ENCODE measurements at regions of chr17 and their contacts with region 1.

Region 1: GRCh38 chr17:59311130-59311920 is 20.1 kb upstream of the YPEL2 start:
- DNase-seq: peak; percentile 79
- H3K4me3 ChIP-seq: no peak overlapping the region
- H3K27ac ChIP-seq: no peak overlapping the region
- H3K4me1 ChIP-seq: no peaks in the 10 kb centered on the region
- H3K27me3 ChIP-seq: no peaks in the 10 kb centered on the region
- CTCF ChIP-seq: peak; percentile 64 to 67
- POLR2A ChIP-seq: no peak

Region 2: GRCh38 chr17:59355696-59356325 is 44.5 kb after region 1 on chr17:
- CTCF ChIA-PET with region 1: no interaction called
- POLR2A ChIA-PET with region 1: no interaction called
- dilution Hi-C with region 1: no loop called
- intact Hi-C with region 1: no loop called
- DNase-seq: no peak
- H3K4me3 ChIP-seq: no peak overlapping the region
- H3K27ac ChIP-seq: no peak overlapping the region
- H3K4me1 ChIP-seq: peaks cover 5% of the 10 kb centered on the region
- H3K27me3 ChIP-seq: no peaks in the 10 kb centered on the region
- CTCF ChIP-seq: no peak
- POLR2A ChIP-seq: no peak

Region 3: DNA sequence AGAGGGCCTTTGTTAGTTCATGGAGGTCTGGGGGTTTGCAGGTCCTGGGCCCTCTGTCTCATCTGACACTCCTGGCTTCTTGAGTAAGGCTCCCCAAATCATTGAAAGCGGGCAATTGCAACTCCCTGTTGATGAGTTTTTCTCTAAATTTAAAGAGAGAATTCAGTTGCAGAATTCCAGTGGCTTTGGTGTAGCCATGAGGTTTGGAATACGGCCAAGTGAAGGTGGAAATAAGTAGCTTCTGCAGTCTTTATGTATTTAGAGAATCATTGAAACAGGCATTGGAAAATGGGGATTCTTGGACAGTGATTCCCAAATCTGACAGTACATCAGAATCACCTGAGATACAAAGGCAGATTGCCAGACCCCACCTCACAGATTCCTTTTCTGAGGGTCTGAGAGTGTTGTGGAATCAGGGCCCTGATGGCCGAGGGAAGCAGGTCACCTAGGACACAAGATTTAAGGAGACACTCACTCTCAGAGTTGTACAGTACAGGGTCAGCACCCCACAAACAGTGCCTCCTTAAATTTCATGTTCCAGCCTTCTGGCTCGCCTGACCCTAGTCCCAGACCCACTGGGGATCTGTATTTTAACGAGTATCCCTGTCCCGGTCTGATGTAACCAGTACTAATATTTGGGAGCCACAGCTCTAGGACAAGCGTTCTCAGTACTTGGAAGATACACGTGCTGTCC is 57.9 kb after region 1 on chr17:
- CTCF ChIA-PET with region 1: no interaction called
- POLR2A ChIA-PET with region 1: no interaction called
- dilution Hi-C with region 1: no loop called
- intact Hi-C with region 1: no loop called
- DNase-seq: no peak
- H3K4me3 ChIP-seq: no peak overlapping the region
- H3K27ac ChIP-seq: no peak overlapping the region
- H3K4me1 ChIP-seq: peaks cover 61% of the 10 kb centered on the region
- H3K27me3 ChIP-seq: no peaks in the 10 kb centered on the region
- CTCF ChIP-seq: no peak
- POLR2A ChIP-seq: no peak

Region 4: DNA sequence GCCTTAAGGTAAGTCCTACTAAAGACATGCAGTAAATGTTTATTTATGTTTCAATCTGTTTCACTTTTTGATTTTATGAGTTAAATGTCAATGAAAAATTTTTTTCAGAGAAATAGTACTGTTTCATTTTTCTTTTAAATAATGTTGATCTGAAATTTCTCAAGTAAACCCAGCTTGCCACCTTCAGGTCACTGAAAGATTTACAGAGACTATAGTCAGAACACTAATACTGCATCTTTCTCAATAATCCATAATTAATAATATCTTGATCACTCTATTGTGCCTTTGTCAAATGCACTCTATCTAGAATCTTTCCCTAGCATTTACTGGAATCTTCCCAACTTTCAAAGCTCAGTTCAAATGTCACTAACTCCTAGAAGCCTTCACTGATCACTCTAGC is 247.7 kb after region 1 on chr17:
- CTCF ChIA-PET with region 1: interaction called, 84 read pairs
- POLR2A ChIA-PET with region 1: no interaction called
- dilution Hi-C with region 1: no loop called
- intact Hi-C with region 1: loop called (anchors 1 kb)
- DNase-seq: peak; percentile 28
- H3K4me3 ChIP-seq: no peak overlapping the region
- H3K27ac ChIP-seq: no peak overlapping the region
- H3K4me1 ChIP-seq: no peaks in the 10 kb centered on the region
- H3K27me3 ChIP-seq: peaks cover 0 to 2% of the 10 kb centered on the region in 2 experiments
- CTCF ChIP-seq: no peak
- POLR2A ChIP-seq: no peak

Region 5: GRCh38 chr17:59565171-59565969 is 254.0 kb after region 1 on chr17 and contains the start of gene DHX40:
- CTCF ChIA-PET with region 1: interaction called, 84 read pairs
- POLR2A ChIA-PET with region 1: no interaction called
- dilution Hi-C with region 1: no loop called
- intact Hi-C with region 1: no loop called
- DNase-seq: peak; percentile 92
- H3K4me3 ChIP-seq: peak within 1 kb of the TSS; percentile 51 to 95 (median 77)
- H3K27ac ChIP-seq: peak within 1 kb of the TSS; percentile 53
- H3K4me1 ChIP-seq: peaks cover 7% of the 10 kb centered on the region
- H3K27me3 ChIP-seq: no peaks in the 10 kb centered on the region
- CTCF ChIP-seq: no peak
- POLR2A ChIP-seq: peak; percentile 20
- total RNA-seq, gene DHX40: 28.6 and 29.7 TPM in 2 replicates

Region 6: GRCh38 chr17:59746849-59747445 is 435.6 kb after region 1 on chr17:
- CTCF ChIA-PET with region 1: interaction called, 3 read pairs
- POLR2A ChIA-PET with region 1: no interaction called
- dilution Hi-C with region 1: no loop called
- intact Hi-C with region 1: loop called (anchors 10 kb)
- DNase-seq: peak; percentile 68
- H3K4me3 ChIP-seq: no peak overlapping the region
- H3K27ac ChIP-seq: no peak overlapping the region
- H3K4me1 ChIP-seq: no peaks in the 10 kb centered on the region
- H3K27me3 ChIP-seq: no peaks in the 10 kb centered on the region
- CTCF ChIP-seq: peak; percentile 30 to 43
- POLR2A ChIP-seq: no peak

Measured in endothelial cell of umbilical vein (primary cell).